ENCODE measurements at regions of chr9 and their contacts with region 1.

Region 1: GRCh38 chr9:109903515-109904138 is 123.6 kb downstream of the PALM2AKAP2 start:
- DNase-seq: no peak
- H3K4me3 ChIP-seq: no peak overlapping the region
- H3K27ac ChIP-seq: no peak overlapping the region
- H3K4me1 ChIP-seq: peaks cover 14 to 46% (median 31%) of the 10 kb centered on the region in 6 donors
- H3K27me3 ChIP-seq: no peaks in the 10 kb centered on the region
- CTCF ChIP-seq: peak; percentile 60 to 95 (median 77)
- POLR2A ChIP-seq: no peak

Region 2: DNA sequence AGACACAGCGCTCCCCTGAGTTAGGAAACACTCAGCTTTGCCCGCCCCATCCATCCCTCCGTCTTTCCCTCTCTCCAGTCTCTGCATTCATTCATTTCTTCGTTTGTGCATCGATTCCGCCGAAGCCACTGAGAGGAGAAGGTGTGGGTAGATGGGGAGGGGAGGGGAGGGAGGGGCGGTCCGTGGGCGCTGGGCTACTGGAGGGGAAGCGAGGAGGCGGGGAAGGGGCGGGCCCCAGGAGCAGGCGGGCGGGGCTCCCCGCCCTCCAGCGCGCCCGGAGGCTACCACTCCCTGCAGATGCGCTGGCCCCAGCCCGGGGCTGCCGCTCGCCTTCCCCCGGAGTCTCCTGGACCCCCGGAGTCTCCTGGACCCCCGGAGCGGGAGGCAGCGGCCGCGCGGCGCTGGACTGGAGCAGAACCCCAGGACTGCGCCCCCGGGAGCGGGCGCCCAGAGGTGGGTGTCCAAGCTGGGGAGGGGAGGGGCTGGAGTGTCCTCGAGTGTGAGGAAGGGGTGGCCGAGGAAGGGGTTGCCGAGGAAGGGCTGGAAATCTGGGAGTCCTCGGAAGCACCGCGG is 144.9 kb after region 1 on chr9:
- intact Hi-C with region 1: loop called (anchors 5 kb)
- DNase-seq: peak; percentile 96
- H3K4me3 ChIP-seq: peak overlapping the region; percentile 54 to 95 (median 88)
- H3K27ac ChIP-seq: peak overlapping the region; percentile 75 to 93 (median 88)
- H3K4me1 ChIP-seq: peaks cover 10 to 69% (median 48%) of the 10 kb centered on the region in 6 donors
- H3K27me3 ChIP-seq: peaks cover 0 to 26% (median 0%) of the 10 kb centered on the region in 7 donors
- CTCF ChIP-seq: no peak
- POLR2A ChIP-seq: peak in 2 of 3 donors; percentile 49 to 93

Region 3: GRCh38 chr9:110152704-110153374 is 249.2 kb after region 1 on chr9:
- intact Hi-C with region 1: loop called (anchors 5 kb)
- DNase-seq: no peak
- H3K4me3 ChIP-seq: no peak overlapping the region
- H3K27ac ChIP-seq: peak overlapping the region in 5 of 8 donors; percentile 41 to 86 (median 79)
- H3K4me1 ChIP-seq: peaks cover 41 to 100% (median 94%) of the 10 kb centered on the region in 6 donors
- H3K27me3 ChIP-seq: no peaks in the 10 kb centered on the region
- CTCF ChIP-seq: peak; percentile 52 to 81 (median 74)
- POLR2A ChIP-seq: no peak